SK-N-SH (cell line): ENCODE measurements at regions of chr15 and their contacts with region 1.

Region 1: DNA sequence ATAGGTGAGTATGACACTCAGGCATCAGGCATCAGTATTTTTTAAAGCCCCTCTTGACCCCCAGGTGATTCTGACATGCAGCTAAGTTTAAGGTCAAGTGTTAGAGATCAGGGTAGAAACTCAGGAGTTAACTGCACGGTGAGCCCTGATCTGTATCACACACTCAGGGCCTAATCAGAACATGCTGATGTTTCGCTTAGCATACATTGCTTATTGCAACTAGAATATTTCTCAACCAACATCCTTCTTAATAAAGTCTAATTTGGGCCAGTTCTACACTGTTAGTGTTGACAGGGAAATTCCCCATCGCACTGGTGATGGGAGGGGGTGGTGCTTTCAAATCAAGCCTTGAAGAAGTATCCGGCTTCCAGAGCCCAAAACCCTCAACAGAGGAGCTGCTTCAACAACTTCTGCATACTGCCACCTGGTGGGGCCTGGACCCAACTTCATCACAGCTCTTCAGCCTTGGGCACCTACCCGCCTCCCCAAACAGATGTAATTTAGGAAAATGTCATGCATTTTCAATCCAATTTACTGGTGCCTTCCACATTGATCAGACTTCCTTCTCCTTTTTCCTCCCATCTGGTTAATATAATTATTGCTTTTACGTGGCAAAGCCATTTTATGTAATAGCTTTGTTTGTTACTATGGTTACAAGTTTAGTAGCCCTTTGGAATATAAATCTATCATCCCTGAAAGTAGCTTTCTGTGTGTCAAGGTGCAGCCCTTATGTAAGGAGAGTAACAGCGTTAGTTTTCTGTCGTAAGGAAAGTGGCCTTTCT is 312.2 kb downstream of the RORA start:
- DNase-seq: peak; percentile 73
- H3K4me3 ChIP-seq: no peak overlapping the region; a peak in 1 of 4 replicates
- H3K27ac ChIP-seq: no peak overlapping the region
- H3K4me1 ChIP-seq: peaks cover 0 to 4% of the 10 kb centered on the region in 2 experiments; a peak in 1 of 4 replicates
- H3K27me3 ChIP-seq: no peaks in the 10 kb centered on the region
- CTCF ChIP-seq: peak; percentile 83
- EP300 ChIP-seq: no peak
- RAD21 ChIP-seq: peak; percentile 89

Region 2: GRCh38 chr15:60026555-60026954 is 890.3 kb before region 1 on chr15:
- CTCF ChIA-PET with region 1: no interaction called
- POLR2A ChIA-PET with region 1: no interaction called
- DNase-seq: no peak
- H3K4me3 ChIP-seq: no peak overlapping the region
- H3K27ac ChIP-seq: no peak overlapping the region
- H3K4me1 ChIP-seq: no peaks in the 10 kb centered on the region
- H3K27me3 ChIP-seq: peaks cover 12% of the 10 kb centered on the region; the same call in 1 of the 2 replicates
- CTCF ChIP-seq: no peak
- EP300 ChIP-seq: no peak
- RAD21 ChIP-seq: no peak

Region 3: DNA sequence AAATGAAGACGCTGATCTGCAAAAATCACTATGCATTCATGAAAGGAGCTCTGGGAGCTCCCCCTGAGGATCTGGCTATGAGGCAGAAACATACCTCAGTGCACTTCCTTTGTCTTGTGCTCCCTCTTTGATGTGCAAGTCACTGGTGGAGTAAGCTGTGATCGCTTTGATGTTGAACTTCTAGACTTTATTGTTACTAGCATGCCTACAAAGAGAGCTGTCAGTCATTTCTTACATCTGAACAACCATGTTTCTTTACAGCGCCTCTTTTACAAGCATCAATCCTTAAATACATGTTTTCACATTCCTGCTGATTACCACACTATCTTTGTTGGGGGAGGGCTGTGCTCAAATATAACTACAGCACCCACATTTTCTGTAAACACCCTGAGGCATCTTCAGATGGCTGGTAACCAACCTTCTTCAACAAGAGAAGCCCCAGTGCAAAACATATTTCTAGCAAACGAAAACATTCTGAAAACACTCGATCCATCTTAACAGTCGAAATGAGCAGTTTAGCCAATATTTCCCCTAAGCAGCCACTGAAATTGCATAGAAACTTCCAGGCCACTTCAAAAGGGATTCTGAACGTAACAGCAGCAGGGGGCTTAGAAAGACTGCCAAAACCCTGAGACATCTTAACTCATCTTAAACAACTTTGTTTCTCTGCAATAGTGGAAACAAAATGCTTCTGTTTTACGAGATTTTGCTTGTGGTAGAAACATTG is 336.1 kb before region 1 on chr15:
- CTCF ChIA-PET with region 1: interaction called, 95 read pairs
- POLR2A ChIA-PET with region 1: no interaction called
- DNase-seq: no peak
- H3K4me3 ChIP-seq: no peak overlapping the region
- H3K27ac ChIP-seq: no peak overlapping the region
- H3K4me1 ChIP-seq: no peaks in the 10 kb centered on the region; a peak in 1 of 4 replicates
- H3K27me3 ChIP-seq: no peaks in the 10 kb centered on the region
- CTCF ChIP-seq: no peak
- EP300 ChIP-seq: no peak
- RAD21 ChIP-seq: no peak

Region 4: DNA sequence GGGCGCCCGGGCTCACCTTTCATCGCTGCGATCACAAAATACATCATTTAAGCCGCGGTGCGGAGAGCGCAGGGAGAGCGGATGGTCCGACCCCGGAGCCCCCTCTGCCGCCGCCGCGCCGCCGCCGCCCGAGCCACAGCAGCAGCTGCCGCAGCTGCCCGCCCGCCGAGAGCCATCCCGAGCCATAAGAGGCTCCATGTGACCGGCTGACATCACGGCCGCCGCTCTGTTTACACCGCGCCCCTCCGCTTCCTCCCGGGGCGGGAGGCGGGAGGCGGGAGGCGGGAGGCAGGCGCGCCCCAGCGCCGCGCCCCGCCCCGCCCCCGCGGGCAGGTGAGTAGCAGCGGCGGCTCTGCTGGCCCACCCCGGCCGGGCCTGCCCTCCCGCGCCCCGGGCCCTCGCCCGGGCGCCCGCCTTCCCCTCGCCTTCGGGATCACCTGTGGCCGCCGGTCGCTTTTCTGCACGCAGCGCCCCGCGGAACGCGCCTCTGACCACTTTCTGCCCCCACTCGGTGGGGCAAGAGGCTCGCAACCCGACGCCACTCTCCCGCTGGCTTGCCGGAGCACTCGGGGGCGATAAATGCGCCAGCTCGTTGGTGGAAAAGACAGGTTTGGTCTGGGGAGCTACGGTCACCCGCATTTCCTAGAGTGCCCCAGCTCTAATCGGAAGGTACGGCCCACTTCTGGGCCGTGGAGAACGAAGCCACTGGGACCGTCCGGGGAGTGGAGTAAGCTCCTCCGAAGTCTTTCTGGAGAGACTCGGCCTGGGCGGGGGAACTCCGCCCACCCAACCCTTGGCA is 324.3 kb before region 1 on chr15:
- CTCF ChIA-PET with region 1: interaction called, 95 read pairs
- POLR2A ChIA-PET with region 1: interaction called, 3 read pairs
- DNase-seq: peak; percentile 88
- H3K4me3 ChIP-seq: peak overlapping the region; percentile 61 to 68
- H3K27ac ChIP-seq: no peak overlapping the region
- H3K4me1 ChIP-seq: peaks cover 0 to 7% of the 10 kb centered on the region in 2 experiments; a peak in 3 of 4 replicates
- H3K27me3 ChIP-seq: peaks cover 10% of the 10 kb centered on the region; the same call in 1 of the 2 replicates
- CTCF ChIP-seq: no peak
- EP300 ChIP-seq: no peak
- RAD21 ChIP-seq: no peak

Region 5: GRCh38 chr15:60720493-60721256 is 196.2 kb before region 1 on chr15:
- CTCF ChIA-PET with region 1: no interaction called
- POLR2A ChIA-PET with region 1: no interaction called
- DNase-seq: no peak
- H3K4me3 ChIP-seq: no peak overlapping the region
- H3K27ac ChIP-seq: no peak overlapping the region
- H3K4me1 ChIP-seq: no peaks in the 10 kb centered on the region
- H3K27me3 ChIP-seq: no peaks in the 10 kb centered on the region
- CTCF ChIP-seq: no peak
- EP300 ChIP-seq: no peak
- RAD21 ChIP-seq: no peak

Region 6: DNA sequence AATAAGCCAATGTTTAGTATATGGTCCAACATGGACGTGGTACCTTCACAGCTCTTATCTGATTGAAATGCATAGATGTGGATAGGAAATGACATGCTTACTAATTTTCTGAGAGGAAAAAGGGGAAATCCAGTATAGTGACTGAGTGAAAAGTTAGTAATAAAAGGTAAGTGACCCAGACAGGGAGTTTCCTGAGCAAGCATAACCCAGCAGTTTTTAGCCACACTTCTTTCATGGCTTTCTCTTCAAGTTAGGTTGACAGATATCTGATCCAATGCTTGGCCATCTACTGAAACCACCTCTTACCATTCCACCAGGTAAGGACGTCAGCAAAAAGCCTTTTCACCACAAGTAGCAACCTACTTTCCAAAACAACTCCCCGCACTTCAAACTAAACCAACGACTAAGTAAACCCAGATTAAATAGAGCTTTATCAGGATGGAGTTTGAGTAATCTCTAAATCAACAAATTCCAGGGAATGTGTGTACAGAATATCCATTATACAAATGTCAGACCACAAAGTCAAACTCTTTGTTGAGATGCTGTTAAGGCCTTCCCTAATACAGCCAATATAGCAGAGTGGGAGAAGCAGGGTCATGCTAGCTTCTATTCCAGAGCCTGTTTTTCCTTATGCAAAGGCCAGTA is 17.4 kb before region 1 on chr15:
- CTCF ChIA-PET with region 1: interaction called, 23 read pairs
- POLR2A ChIA-PET with region 1: no interaction called
- DNase-seq: no peak
- H3K4me3 ChIP-seq: no peak overlapping the region
- H3K27ac ChIP-seq: no peak overlapping the region
- H3K4me1 ChIP-seq: no peaks in the 10 kb centered on the region; a peak in 1 of 4 replicates
- H3K27me3 ChIP-seq: no peaks in the 10 kb centered on the region
- CTCF ChIP-seq: no peak
- EP300 ChIP-seq: no peak
- RAD21 ChIP-seq: no peak

Region 7: DNA sequence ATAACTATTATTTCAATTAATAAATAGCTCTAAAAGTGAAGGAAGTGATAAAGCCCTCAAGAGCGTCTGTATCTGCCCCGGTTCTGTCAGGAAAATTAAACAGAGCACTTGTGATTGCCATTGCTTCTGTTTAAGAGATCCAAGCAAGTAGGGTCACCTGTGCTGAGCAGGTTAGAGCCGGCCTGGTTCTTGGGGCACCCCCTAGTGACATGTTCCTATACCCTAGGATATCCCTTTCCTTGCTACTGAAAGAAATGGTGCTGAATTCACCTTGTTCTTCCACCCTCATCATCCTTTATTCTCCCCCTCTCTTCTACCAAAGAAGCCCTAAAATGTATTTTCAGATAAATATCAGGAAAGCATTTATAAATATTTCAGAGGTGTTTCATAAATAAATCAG is 11.3 kb before region 1 on chr15:
- CTCF ChIA-PET with region 1: interaction called, 23 read pairs
- POLR2A ChIA-PET with region 1: no interaction called
- DNase-seq: no peak
- H3K4me3 ChIP-seq: no peak overlapping the region
- H3K27ac ChIP-seq: no peak overlapping the region
- H3K4me1 ChIP-seq: peaks cover 0 to 18% of the 10 kb centered on the region in 2 experiments; a peak in 2 of 4 replicates
- H3K27me3 ChIP-seq: no peaks in the 10 kb centered on the region
- CTCF ChIP-seq: no peak
- EP300 ChIP-seq: no peak
- RAD21 ChIP-seq: peak; percentile 39

Region 8: DNA sequence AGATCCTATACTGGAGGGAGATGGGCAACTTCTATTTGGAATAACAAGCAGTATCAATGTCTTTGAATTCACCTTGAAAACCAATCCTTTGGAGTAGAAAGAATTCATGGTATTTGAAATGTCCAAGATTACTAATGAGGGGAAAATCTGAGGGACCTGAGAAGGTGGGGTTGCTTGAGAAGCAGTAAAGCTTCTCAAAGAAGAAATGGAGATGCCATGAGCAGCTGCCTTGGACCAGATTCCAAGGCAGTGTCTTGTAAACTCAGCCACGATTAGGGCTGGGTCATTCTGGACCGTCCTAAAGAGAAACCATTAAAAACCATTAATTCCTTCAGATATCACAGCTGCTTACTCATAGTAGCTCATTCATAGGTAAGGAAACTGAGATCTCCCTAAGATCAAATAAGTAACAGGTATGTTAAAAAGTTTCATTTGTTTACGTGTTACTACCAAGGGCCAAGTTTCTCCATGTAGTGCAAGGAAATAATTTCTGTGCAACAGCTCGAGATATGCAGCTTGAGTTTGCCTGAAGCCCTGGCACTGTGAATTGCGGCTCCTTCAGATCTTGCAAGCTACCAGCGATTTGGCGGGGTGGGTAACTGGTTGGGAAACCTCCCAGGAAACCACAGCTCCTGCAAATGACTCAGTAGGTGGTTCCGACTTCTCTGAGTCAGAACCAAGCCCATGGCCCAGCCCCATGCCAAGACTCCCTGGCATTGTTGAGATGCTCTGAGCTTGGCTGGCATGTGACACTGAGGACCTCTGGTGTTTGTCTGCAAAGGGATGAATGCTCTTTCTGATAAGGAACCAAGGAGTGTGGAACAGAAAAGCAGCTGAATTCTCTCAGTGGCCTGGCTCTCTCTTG is 15.4 kb after region 1 on chr15:
- CTCF ChIA-PET with region 1: interaction called, 14 read pairs
- POLR2A ChIA-PET with region 1: no interaction called
- DNase-seq: no peak
- H3K4me3 ChIP-seq: no peak overlapping the region
- H3K27ac ChIP-seq: no peak overlapping the region
- H3K4me1 ChIP-seq: peaks cover 3 to 6% of the 10 kb centered on the region in 2 experiments; a peak in 2 of 4 replicates
- H3K27me3 ChIP-seq: no peaks in the 10 kb centered on the region
- CTCF ChIP-seq: peak; percentile 36
- EP300 ChIP-seq: no peak
- RAD21 ChIP-seq: peak; percentile 39

Region 9: GRCh38 chr15:61011576-61012336 is 94.9 kb after region 1 on chr15:
- CTCF ChIA-PET with region 1: no interaction called
- POLR2A ChIA-PET with region 1: no interaction called
- DNase-seq: no peak
- H3K4me3 ChIP-seq: no peak overlapping the region
- H3K27ac ChIP-seq: no peak overlapping the region
- H3K4me1 ChIP-seq: no peaks in the 10 kb centered on the region; a peak in 1 of 4 replicates
- H3K27me3 ChIP-seq: no peaks in the 10 kb centered on the region
- CTCF ChIP-seq: no peak
- EP300 ChIP-seq: no peak
- RAD21 ChIP-seq: no peak

Region 10: GRCh38 chr15:61051569-61052031 is 134.7 kb after region 1 on chr15:
- CTCF ChIA-PET with region 1: interaction called, 29 read pairs
- POLR2A ChIA-PET with region 1: no interaction called
- DNase-seq: peak; percentile 61
- H3K4me3 ChIP-seq: no peak overlapping the region
- H3K27ac ChIP-seq: no peak overlapping the region
- H3K4me1 ChIP-seq: peaks cover 0 to 22% of the 10 kb centered on the region in 2 experiments; a peak in 2 of 4 replicates
- H3K27me3 ChIP-seq: no peaks in the 10 kb centered on the region
- CTCF ChIP-seq: peak; percentile 81
- EP300 ChIP-seq: no peak
- RAD21 ChIP-seq: peak; percentile 95